ENCODE measurements at regions of chr11 and their contacts with region 1.

Region 1: GRCh38 chr11:67401495-67402191 is at the start of gene PPP1CA:
- DNase-seq: peak; percentile 99
- CTCF ChIP-seq: peak; percentile 50

Region 2: GRCh38 chr11:67391304-67392132 is 10.1 kb before region 1 on chr11 and contains the start of gene RAD9A:
- CTCF ChIA-PET with region 1: interaction called, 32 read pairs
- POLR2A ChIA-PET with region 1: interaction called, 22 read pairs
- DNase-seq: peak; percentile 98
- CTCF ChIP-seq: no peak

Region 3: DNA sequence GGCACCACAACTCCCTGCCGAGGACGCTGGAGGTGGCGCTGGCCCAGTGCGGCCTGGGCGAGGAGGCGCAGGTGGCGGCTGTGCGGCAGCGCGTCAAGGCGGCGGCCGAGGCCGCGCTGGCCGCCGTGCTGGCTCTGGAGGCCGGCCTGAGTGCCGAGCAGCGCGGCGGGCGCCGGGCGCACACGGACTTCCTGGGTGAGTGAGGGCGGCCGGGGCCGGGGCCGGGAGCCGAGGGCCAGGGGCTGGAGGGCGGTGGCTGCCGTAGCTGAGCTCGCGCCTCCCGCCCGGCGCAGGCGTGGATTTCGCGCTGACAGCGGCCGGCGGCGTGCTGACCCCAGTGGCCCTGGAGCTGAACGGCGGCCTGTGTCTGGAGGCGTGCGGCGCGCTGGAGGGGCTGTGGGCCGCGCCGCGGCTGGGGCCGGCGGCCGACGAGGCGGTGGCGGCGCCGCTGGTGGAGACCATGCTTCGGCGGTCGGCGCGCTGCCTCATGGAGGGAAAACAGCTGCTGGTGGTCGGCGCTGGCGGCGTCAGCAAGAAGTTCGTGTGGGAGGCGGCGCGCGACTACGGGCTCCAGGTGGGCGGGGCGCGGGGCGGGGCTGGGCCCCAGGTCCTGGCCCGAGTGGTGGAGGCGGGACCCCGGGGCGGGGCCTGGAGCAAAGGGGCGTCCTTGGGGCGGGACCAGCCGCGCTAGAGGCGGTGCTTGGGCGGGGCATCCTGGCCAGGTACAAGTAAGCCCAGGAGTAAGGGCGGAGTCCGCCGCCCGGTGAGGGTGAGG is 19.2 kb after region 1 on chr11:
- CTCF ChIA-PET with region 1: interaction called, 50 read pairs
- POLR2A ChIA-PET with region 1: interaction called, 4 read pairs
- DNase-seq: peak; percentile 99
- CTCF ChIP-seq: no peak

Region 4: GRCh38 chr11:67482825-67483798 is 81.5 kb after region 1 on chr11 and contains the start of gene AIP:
- CTCF ChIA-PET with region 1: interaction called, 13 read pairs
- POLR2A ChIA-PET with region 1: interaction called, 4 read pairs
- DNase-seq: peak; percentile 94
- CTCF ChIP-seq: no peak

Region 5: GRCh38 chr11:67505605-67506396 is 104.2 kb after region 1 on chr11:
- CTCF ChIA-PET with region 1: interaction called, 15 read pairs
- POLR2A ChIA-PET with region 1: no interaction called
- DNase-seq: peak; percentile 81
- CTCF ChIP-seq: peak; percentile 99

Region 6: DNA sequence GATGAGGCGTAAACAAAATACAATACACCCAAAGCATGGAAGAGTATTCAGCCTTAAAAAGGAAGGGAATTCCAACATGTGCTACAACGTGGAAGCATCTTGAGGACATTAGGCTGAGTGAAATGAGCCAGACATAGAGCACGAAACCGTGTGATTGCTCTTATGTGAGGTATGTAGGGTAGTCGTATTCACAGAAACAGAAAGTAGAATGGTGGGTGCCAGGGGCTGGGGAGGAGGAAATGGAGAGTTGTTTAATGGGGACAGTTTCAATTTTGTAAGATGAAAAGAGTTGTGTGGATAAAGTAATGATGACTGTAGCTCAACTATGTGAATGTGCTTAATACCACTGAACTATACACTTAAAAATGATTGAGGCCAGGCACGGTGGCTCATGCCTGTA is 821.6 kb after region 1 on chr11:
- CTCF ChIA-PET with region 1: no interaction called
- POLR2A ChIA-PET with region 1: no interaction called
- DNase-seq: no peak
- CTCF ChIP-seq: no peak

Measured in GM10248 (cell line).